Esophagus muscularis mucosa (tissue), 4 donors: ENCODE measurements at regions of chr18 and their contacts with region 1.

Region 1: GRCh38 chr18:34122724-34123334 is 101.9 kb downstream of the NOL4 start:
- DNase-seq: no peak
- H3K4me3 ChIP-seq: no peak overlapping the region
- H3K27ac ChIP-seq: no peak overlapping the region
- H3K4me1 ChIP-seq: no peaks in the 10 kb centered on the region
- H3K27me3 ChIP-seq: no peaks in the 10 kb centered on the region
- CTCF ChIP-seq: peak; percentile 74 to 87 (median 81)
- EP300 ChIP-seq: no peak
- POLR2A ChIP-seq: no peak

Region 2: DNA sequence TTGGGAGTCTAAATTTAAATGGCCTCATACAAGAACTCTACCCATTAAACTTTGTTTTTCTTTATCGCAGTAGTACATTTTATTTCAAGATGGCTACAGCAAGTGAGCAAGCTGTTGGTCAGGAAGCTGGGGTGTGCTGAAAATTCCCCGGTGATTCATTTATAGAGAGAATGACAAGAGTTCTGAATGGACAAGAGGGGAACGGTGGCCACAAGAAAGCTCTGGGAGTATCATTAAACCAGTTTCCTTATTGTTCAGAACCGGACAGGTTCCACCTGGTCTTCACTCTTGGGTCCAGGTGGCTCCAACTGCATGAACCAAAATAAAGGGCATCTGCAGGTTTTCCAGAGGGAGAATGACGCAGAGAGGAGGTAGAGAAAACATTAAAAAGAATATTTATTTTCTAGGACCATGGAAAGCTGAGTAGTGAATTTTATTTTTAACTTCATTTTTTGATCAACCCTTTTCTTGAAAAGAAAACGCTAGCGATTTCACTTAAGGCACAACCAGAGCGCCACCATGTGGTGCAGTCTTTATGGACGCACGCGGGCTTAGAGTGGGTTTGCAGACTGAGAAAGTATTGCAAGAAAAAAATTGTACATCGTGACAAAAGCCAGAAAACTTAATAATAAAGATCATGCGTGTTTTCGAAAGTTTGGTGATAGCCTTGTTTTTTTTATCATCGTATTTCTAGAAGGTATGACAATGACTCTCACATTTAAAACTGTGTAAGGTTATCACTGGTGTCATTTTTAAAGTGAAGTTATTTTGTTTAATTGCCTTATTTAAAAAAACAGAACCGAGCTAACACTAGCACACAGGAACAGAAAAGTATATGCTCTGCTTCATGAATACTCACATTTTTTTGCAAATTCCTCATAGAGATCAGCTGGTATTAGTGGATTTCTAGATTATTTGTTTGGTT is 199.8 kb after region 1 on chr18:
- intact Hi-C with region 1: loop called (anchors 10 kb)
- DNase-seq: no peak
- H3K4me3 ChIP-seq: no peak overlapping the region
- H3K27ac ChIP-seq: no peak overlapping the region
- H3K4me1 ChIP-seq: peaks cover 0 to 5% (median 0%) of the 10 kb centered on the region in 4 donors
- H3K27me3 ChIP-seq: no peaks in the 10 kb centered on the region
- CTCF ChIP-seq: peak; percentile 28 to 56 (median 43)
- EP300 ChIP-seq: no peak
- POLR2A ChIP-seq: no peak